ENCODE measurements at regions of chr22 and their contacts with region 1.

Region 1: GRCh38 chr22:43945632-43946383 is 9.4 kb upstream of the SAMM50 start:
- DNase-seq: peak; percentile 42 to 74 (median 67)
- ATAC-seq: peak; percentile 97
- H3K4me3 ChIP-seq: no peak overlapping the region
- H3K4me3 Mint-ChIP-seq: no peak overlapping the region
- H3K27ac ChIP-seq: no peak overlapping the region
- H3K27ac Mint-ChIP-seq: no peak overlapping the region
- H3K4me1 ChIP-seq: no peaks in the 10 kb centered on the region
- H3K4me1 Mint-ChIP-seq: no peaks in the 10 kb centered on the region
- H3K27me3 ChIP-seq: peaks cover 0 to 4% of the 10 kb centered on the region in 2 experiments
- H3K27me3 Mint-ChIP-seq: peaks cover 14% of the 10 kb centered on the region
- CTCF ChIP-seq: peak; percentile 73

Region 2: DNA sequence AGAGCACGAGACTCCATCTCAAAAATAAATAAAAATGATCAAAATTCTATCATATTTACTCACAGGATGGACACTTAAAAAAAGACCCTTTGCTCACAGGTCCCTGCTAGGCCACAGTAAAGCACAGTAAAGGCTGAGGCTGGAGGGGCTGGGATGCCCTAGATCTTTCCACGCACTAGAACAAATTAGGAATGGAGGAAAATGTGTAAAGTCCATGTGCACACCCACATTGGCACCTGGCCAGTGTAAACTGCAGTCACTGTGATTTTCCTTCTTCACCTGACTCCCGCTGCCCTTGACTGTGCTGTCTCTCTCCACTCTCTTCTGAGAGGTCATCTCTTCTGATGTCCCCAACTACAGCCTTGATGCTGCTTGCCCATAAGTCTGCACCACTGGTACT is 329.2 kb before region 1 on chr22:
- CTCF ChIA-PET with region 1: no interaction called
- POLR2A ChIA-PET with region 1: no interaction called
- intact Hi-C with region 1: no loop called
- DNase-seq: no peak
- ATAC-seq: no peak
- H3K4me3 ChIP-seq: no peak overlapping the region
- H3K4me3 Mint-ChIP-seq: no peak overlapping the region
- H3K27ac ChIP-seq: no peak overlapping the region
- H3K27ac Mint-ChIP-seq: no peak overlapping the region
- H3K4me1 ChIP-seq: no peaks in the 10 kb centered on the region
- H3K4me1 Mint-ChIP-seq: no peaks in the 10 kb centered on the region
- H3K27me3 ChIP-seq: peaks cover 0 to 2% of the 10 kb centered on the region in 2 experiments
- H3K27me3 Mint-ChIP-seq: peaks cover 25% of the 10 kb centered on the region
- CTCF ChIP-seq: no peak

Region 3: GRCh38 chr22:43883012-43883661 is 62.7 kb before region 1 on chr22:
- CTCF ChIA-PET with region 1: interaction called, 11 read pairs
- POLR2A ChIA-PET with region 1: no interaction called
- intact Hi-C with region 1: loop called in 1 of 2 experiments (anchors 1 kb)
- DNase-seq: peak in 6 of 9 experiments; percentile 22 to 68 (median 43)
- ATAC-seq: peak; percentile 44
- H3K4me3 ChIP-seq: no peak overlapping the region
- H3K4me3 Mint-ChIP-seq: no peak overlapping the region
- H3K27ac ChIP-seq: no peak overlapping the region
- H3K27ac Mint-ChIP-seq: no peak overlapping the region
- H3K4me1 ChIP-seq: no peaks in the 10 kb centered on the region
- H3K4me1 Mint-ChIP-seq: no peaks in the 10 kb centered on the region
- H3K27me3 ChIP-seq: no peaks in the 10 kb centered on the region
- H3K27me3 Mint-ChIP-seq: peaks cover 25% of the 10 kb centered on the region
- CTCF ChIP-seq: peak; percentile 43

Region 4: DNA sequence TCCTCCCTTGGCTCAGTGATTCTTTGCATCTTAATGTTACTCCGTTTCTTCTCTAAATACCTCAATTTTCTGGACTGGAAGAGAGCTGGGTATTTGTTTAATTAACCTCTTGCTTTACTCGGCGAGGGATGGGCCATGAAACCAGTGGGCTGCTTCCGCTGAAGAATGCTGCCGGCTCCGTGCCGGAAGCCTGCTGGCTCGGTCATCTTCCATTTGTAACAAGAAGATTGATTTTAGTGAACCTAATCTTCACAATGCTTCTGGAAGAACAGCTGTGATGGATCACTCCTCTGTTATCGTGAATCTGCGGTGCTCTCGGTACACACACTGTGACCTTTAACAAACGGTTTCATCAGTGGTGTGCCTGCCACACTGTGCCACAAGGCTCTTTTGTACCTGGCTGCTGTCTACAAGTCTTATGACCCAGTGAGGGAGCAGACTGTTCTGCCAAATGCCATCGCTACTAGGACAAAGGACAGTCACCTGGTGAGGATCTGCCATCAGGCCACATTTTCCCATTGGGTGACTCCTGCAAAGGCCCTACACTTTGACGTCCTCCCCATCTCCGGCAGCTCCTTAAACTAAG is 53.0 kb after region 1 on chr22:
- CTCF ChIA-PET with region 1: no interaction called
- POLR2A ChIA-PET with region 1: no interaction called
- intact Hi-C with region 1: no loop called
- DNase-seq: no peak
- ATAC-seq: no peak
- H3K4me3 ChIP-seq: no peak overlapping the region
- H3K4me3 Mint-ChIP-seq: no peak overlapping the region
- H3K27ac ChIP-seq: no peak overlapping the region
- H3K27ac Mint-ChIP-seq: peak overlapping the region; percentile 57
- H3K4me1 ChIP-seq: peaks cover 15% of the 10 kb centered on the region
- H3K4me1 Mint-ChIP-seq: peaks cover 21% of the 10 kb centered on the region
- H3K27me3 ChIP-seq: no peaks in the 10 kb centered on the region
- H3K27me3 Mint-ChIP-seq: no peaks in the 10 kb centered on the region
- CTCF ChIP-seq: no peak